ENCODE measurements at regions of chr10 and their contacts with region 1.

Region 1: DNA sequence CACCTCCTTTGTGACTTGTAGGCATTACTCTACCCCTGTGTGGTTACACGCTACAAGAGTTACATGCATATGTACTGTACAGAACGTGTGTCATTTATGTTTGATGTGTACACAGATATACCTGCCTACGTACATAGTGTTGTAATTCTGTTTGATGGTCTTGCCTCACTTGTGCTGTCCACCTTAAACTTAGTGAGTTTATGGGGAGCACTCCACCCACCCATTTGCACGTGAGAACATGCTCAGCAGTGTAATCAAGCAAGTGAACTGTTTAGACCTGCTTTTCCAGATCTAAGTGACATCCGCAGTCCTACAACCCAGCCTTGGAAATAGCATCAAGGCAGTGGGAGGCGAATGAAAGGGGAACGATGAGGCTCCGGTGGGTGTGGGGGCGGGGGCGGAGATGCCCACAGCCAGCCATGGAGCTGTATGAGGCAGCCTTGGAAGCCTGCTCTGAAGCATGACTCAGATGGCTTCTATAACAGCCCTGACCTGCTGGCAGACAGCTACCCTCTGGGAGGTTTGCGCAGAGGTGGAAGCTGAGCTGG is 52.1 kb downstream of the SUFU start:
- DNase-seq: peak; percentile 56
- H3K4me3 ChIP-seq: no peak overlapping the region
- H3K27ac ChIP-seq: peak overlapping the region; percentile 59
- H3K27me3 ChIP-seq: no peaks in the 10 kb centered on the region
- CTCF ChIP-seq: no peak

Region 2: GRCh38 chr10:102524746-102525145 is 31.1 kb before region 1 on chr10:
- CTCF ChIA-PET with region 1: no interaction called
- POLR2A ChIA-PET with region 1: interaction called, 13 read pairs
- DNase-seq: no peak
- H3K4me3 ChIP-seq: no peak overlapping the region
- H3K27ac ChIP-seq: no peak overlapping the region
- H3K27me3 ChIP-seq: no peaks in the 10 kb centered on the region
- CTCF ChIP-seq: no peak